Left cardiac atrium (tissue), 4 donors: ENCODE measurements at regions of chr20 and their contacts with region 1.

Region 1: DNA sequence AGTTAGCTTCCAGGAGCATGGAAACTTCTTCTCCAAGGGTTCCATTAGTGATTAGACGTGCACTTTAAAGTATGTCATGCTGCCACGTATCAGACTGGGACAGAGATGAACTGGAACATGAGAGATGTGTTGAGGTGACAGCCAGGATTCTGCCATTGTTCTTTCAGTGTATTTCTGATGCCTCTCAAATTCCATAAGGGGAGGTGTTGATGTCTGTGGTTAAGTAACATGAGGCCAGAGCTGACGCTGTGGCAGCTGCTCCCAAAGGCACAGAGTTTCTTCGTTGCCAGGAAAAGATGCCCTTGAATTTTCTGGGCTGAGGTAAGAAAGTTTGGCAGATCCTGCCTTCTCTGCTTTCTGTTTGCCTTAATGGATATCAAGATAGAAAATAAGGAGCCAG is 63.5 kb downstream of the TRMT6 start:
- DNase-seq: peak; percentile 26
- ATAC-seq: peak; percentile 88 to 91

Region 2: GRCh38 chr20:5770987-5771318 is 115.8 kb before region 1 on chr20:
- intact Hi-C with region 1: loop called in 1 of 2 experiments (anchors 5 kb)
- DNase-seq: no peak
- ATAC-seq: no peak

Region 3: GRCh38 chr20:5806457-5807263 is 80.1 kb before region 1 on chr20:
- intact Hi-C with region 1: loop called in 1 of 2 experiments (anchors 10 kb)
- DNase-seq: no peak
- ATAC-seq: peak; percentile 39 to 68

Region 4: GRCh38 chr20:5834436-5835005 is 52.3 kb before region 1 on chr20:
- intact Hi-C with region 1: loop called in 1 of 2 experiments (anchors 5 kb)
- DNase-seq: no peak
- ATAC-seq: no peak

Region 5: DNA sequence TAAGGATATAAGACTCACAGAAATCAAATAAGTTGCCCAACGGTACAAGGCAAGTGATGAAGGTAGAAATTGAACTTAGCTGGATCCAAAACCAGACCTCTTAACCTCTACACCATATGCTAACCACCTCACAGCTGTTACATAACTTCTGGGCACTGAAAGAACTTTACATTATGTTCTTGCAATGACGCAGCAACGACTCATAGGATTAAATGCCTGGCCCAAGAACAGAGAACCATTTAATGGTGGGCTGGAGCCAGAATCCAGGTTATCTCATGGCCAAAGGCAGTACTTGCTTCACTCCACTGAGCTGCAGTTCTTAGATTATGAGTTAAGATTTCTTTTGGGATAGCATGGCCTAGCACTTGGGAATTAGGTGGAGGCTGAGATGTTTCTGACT is 59.2 kb after region 1 on chr20:
- intact Hi-C with region 1: no loop called
- DNase-seq: no peak
- ATAC-seq: no peak

Region 6: GRCh38 chr20:6008254-6008653 is 121.5 kb after region 1 on chr20:
- intact Hi-C with region 1: no loop called
- DNase-seq: peak; percentile 61
- ATAC-seq: peak; percentile 29 to 64